A673 (cell line): ENCODE measurements at regions of chr9 and their contacts with region 1.

Region 1: DNA sequence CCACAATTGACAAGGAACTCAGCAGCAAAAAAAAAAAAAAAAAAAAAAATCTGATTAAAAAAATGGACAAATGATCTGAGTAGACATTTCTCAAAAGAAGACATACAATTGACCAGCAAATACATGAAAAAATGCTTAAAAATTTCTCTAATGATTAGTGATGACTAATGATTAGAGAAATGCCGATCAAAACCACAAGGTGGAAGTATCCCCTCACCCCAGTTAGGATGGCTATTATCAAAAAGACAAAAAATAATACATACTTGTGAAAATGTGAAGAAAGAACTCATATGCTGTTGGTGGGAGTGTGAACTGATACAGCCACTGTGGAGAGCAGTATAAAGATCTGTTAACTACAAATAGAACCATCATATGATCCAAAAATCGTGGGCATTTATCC is 245.3 kb downstream of the OSTF1 start:
- DNase-seq: no peak
- H3K4me3 ChIP-seq: no peak overlapping the region
- H3K27ac ChIP-seq: no peak overlapping the region
- H3K4me1 ChIP-seq: no peaks in the 10 kb centered on the region
- H3K27me3 ChIP-seq: no peaks in the 10 kb centered on the region
- CTCF ChIP-seq: peak; percentile 41; the same call in 1 of the 2 replicates

Region 2: GRCh38 chr9:75487856-75488718 is 154.5 kb after region 1 on chr9:
- CTCF ChIA-PET with region 1: no interaction called
- POLR2A ChIA-PET with region 1: no interaction called
- intact Hi-C with region 1: loop called (anchors 10 kb)
- DNase-seq: peak; percentile 1
- H3K4me3 ChIP-seq: no peak overlapping the region
- H3K27ac ChIP-seq: no peak overlapping the region
- H3K4me1 ChIP-seq: no peaks in the 10 kb centered on the region
- H3K27me3 ChIP-seq: no peaks in the 10 kb centered on the region
- CTCF ChIP-seq: no peak

Region 3: DNA sequence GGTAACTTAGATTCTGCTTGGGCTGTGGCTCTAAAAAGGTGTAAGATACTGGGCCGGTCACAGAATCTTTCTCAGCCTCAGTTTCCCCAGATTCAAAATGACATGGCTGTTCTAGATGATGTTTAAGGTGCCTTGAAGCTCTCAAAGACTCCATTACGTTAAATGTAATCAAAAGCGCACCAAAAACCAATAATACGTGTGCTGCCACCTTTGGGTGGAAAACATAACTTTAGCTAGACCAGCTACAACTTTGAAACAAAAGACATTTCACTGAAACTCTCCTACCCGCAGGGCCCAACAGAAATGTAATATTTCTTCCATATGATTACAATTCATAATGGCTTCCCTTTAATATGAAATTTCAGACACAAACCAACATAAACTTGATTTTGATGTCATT is 521.9 kb after region 1 on chr9:
- CTCF ChIA-PET with region 1: no interaction called
- POLR2A ChIA-PET with region 1: no interaction called
- intact Hi-C with region 1: loop called (anchors 5 kb)
- DNase-seq: peak; percentile 33
- H3K4me3 ChIP-seq: no peak overlapping the region
- H3K27ac ChIP-seq: no peak overlapping the region
- H3K4me1 ChIP-seq: no peaks in the 10 kb centered on the region
- H3K27me3 ChIP-seq: no peaks in the 10 kb centered on the region
- CTCF ChIP-seq: peak; percentile 58